ENCODE measurements at regions of chr17 and their contacts with region 1.

Region 1: GRCh38 chr17:78598013-78598471 is 20.8 kb upstream of the DNAH17 start:
- DNase-seq: peak in 1 of 5 donors; percentile 26
- ATAC-seq: peak in 1 of 4 donors; percentile 45
- H3K4me3 ChIP-seq: no peak overlapping the region
- H3K27ac ChIP-seq: peak overlapping the region in 1 of 12 donors; percentile 2
- H3K4me1 ChIP-seq: peaks cover 0 to 20% (median 7%) of the 10 kb centered on the region in 12 donors
- H3K27me3 ChIP-seq: no peaks in the 10 kb centered on the region
- CTCF ChIP-seq: no peak
- POLR2A ChIP-seq: no peak

Region 2: GRCh38 chr17:78529871-78530670 is 68.0 kb before region 1 on chr17:
- intact Hi-C with region 1: no loop called
- DNase-seq: no peak
- ATAC-seq: no peak
- H3K4me3 ChIP-seq: no peak overlapping the region
- H3K27ac ChIP-seq: no peak overlapping the region
- H3K4me1 ChIP-seq: peaks cover 0 to 4% (median 0%) of the 10 kb centered on the region in 12 donors
- H3K27me3 ChIP-seq: no peaks in the 10 kb centered on the region
- CTCF ChIP-seq: no peak
- POLR2A ChIP-seq: no peak

Region 3: GRCh38 chr17:78541488-78542237 is 56.4 kb before region 1 on chr17:
- intact Hi-C with region 1: loop called in 1 of 10 experiments (anchors 10 kb)
- DNase-seq: peak in 1 of 5 donors; percentile 43
- ATAC-seq: peak in 2 of 4 donors; percentile 44 to 47
- H3K4me3 ChIP-seq: no peak overlapping the region
- H3K27ac ChIP-seq: no peak overlapping the region
- H3K4me1 ChIP-seq: peaks cover 0 to 6% (median 0%) of the 10 kb centered on the region in 12 donors
- H3K27me3 ChIP-seq: no peaks in the 10 kb centered on the region
- CTCF ChIP-seq: no peak
- POLR2A ChIP-seq: no peak

Region 4: DNA sequence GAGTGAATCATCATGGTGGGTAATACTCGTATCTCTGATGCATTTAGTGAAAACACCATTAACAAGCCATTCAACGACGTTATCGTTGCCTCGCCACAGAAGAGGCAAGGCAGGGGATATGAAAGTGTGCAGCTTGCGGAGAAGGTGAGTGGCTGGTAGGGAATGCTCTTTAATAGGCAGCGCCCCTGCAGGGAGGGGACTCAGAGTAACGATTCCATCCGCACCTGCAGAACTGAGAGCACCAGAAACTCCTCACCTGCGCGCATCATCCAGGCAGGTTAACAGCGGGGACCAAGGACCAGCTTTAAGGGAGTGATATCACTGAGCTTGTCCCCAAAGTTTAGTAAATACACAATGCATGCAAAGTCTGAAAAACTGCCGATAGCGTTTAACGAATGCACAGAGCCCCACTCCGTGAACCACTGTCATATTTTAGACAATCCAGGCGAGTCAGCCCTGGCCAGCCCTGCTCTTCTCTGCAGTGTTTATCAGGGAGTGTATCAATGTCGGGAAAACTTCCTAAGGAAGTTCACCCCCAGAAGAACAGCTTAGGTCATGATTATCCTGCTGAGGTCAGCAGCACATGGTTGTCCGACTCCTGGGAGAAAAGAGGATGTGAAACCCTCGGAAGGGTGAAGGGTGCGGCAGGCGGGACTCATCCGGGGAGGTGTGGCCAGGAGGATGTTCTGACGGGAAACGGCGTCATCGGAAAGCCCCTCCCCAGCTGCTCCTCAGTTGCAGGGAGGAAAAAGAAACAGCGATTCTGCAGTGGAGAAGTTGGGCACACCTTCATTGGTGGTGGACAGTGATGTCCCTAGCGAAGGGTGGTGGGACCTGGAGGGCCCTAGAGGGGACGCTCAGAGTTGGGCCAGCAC is 47.6 kb after region 1 on chr17:
- intact Hi-C with region 1: loop called in 3 of 10 experiments (anchors 5 to 10 kb)
- DNase-seq: peak; percentile 87 to 90 (median 89)
- ATAC-seq: peak; percentile 87 to 97 (median 93)
- H3K4me3 ChIP-seq: peak overlapping the region in 1 of 12 donors; percentile 18
- H3K27ac ChIP-seq: peak overlapping the region in 11 of 12 donors; percentile 41 to 92 (median 82)
- H3K4me1 ChIP-seq: peaks cover 0 to 30% (median 7%) of the 10 kb centered on the region in 12 donors
- H3K27me3 ChIP-seq: peaks cover 0 to 7% (median 0%) of the 10 kb centered on the region in 9 donors
- CTCF ChIP-seq: no peak
- POLR2A ChIP-seq: no peak

Region 5: DNA sequence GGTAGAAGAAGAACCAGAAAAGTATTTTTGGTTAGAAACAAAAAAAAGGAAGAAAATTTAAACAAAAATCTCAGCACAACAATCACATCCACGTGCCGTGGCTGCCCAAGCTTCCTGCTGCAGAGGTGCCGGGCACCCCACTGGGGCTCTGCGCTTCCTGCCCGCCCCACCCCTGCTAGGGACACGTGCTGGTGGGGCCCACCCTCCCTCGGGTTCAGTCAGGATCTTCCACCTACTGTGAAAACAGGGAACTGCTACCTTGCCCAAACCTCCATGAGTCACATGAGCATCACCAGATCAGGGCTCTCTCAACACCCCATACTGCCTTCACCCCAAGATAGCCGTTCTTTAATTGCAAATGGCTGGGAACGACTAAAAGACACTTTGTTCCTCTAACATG is 208.4 kb after region 1 on chr17:
- intact Hi-C with region 1: loop called in 1 of 10 experiments (anchors 10 kb)
- DNase-seq: peak in 2 of 5 donors; percentile 48 to 50
- ATAC-seq: no peak
- H3K4me3 ChIP-seq: no peak overlapping the region
- H3K27ac ChIP-seq: peak overlapping the region in 4 of 12 donors; percentile 9 to 81 (median 34)
- H3K4me1 ChIP-seq: peaks cover 0 to 41% (median 9%) of the 10 kb centered on the region in 12 donors
- H3K27me3 ChIP-seq: no peaks in the 10 kb centered on the region
- CTCF ChIP-seq: no peak
- POLR2A ChIP-seq: no peak